ENCODE measurements at regions of chr16 and their contacts with region 1.

Region 1: DNA sequence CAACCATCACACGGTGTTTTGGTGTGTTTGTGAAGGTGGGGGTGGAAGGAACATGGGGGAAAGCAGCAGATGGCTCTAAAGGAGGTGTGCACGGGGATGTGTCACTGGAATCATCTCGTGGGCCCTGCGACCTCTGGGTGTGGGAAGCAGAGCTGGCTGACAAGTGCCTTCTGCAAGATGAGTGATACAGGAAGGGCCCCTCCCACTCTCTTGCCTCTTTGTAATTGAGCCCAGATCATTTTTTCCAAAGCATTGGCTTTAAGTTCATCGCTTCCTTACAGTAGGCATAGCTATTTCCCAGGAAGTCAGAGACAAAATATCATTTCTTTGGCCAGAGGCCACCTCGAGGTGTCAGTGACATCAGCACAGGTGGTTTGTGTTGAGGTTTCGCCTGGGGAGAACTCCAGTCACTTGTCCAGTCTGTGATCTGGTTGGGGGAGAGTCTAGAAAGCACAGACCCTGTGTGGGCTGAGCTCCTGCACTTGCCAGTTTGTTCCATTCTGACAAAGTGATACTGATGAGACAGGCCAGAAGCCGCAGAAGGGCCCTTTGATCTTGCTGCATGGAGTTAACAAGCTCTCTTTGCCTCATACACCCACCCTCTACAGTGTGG is 20.6 kb upstream of the SNTB2 start:
- DNase-seq: peak; percentile 48
- H3K4me3 Mint-ChIP-seq: no peak overlapping the region
- H3K27ac Mint-ChIP-seq: peak overlapping the region; percentile 69
- H3K4me1 Mint-ChIP-seq: peaks cover 37% of the 10 kb centered on the region
- H3K27me3 Mint-ChIP-seq: no peaks in the 10 kb centered on the region

Region 2: GRCh38 chr16:69073161-69073669 is 93.1 kb before region 1 on chr16:
- CTCF ChIA-PET with region 1: no interaction called
- POLR2A ChIA-PET with region 1: no interaction called
- DNase-seq: no peak
- H3K4me3 Mint-ChIP-seq: no peak overlapping the region
- H3K27ac Mint-ChIP-seq: no peak overlapping the region
- H3K4me1 Mint-ChIP-seq: no peaks in the 10 kb centered on the region
- H3K27me3 Mint-ChIP-seq: no peaks in the 10 kb centered on the region

Region 3: DNA sequence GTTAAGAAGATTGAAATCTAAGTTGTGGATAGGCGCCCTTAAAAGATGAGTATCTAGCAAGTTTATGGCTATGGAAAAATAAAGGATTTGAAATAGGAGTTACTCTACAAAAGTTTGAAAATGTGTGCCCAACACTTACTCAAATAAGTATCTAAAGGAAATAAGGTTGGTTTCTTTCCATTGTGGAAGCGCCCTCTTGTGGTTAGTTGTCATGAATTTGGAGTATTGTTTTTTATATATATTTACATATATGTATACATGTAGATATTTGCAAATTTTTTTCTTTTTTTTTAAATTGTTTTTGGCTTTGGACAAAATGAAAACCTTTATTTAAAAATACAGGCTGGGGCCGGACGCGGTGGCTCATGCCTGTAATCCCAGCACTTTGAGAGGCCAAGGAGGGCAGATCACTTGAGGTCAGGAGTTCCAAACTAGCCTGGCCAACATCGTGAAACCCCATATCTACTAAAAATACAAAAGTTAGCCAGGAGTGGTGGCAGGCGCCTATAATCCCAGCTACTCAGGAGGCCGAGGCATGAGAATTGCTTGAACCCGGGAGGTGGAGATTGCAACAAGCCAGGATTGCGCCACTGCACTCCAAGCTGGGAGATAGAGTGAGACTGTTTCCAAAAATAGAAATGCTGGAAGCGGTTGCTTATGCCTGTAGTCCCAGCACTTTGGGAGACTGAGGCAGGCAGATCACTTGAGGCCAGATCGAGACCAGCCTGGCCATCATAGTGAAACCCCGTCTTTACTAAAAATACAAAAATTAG is 120.8 kb after region 1 on chr16:
- CTCF ChIA-PET with region 1: interaction called, 11 read pairs
- POLR2A ChIA-PET with region 1: no interaction called
- DNase-seq: no peak
- H3K4me3 Mint-ChIP-seq: no peak overlapping the region
- H3K27ac Mint-ChIP-seq: no peak overlapping the region
- H3K4me1 Mint-ChIP-seq: peaks cover 2% of the 10 kb centered on the region
- H3K27me3 Mint-ChIP-seq: no peaks in the 10 kb centered on the region